ENCODE measurements at regions of chr6 and their contacts with region 1.

Region 1: GRCh38 chr6:119742188-119742803 is 392.7 kb upstream of the MAN1A1 start:
- DNase-seq: peak; percentile 71
- ATAC-seq: peak; percentile 63
- H3K4me3 ChIP-seq: no peak overlapping the region
- H3K4me3 Mint-ChIP-seq: no peak overlapping the region
- H3K27ac ChIP-seq: no peak overlapping the region
- H3K27ac Mint-ChIP-seq: no peak overlapping the region
- H3K4me1 ChIP-seq: peaks cover 0 to 6% of the 10 kb centered on the region in 2 donors
- H3K4me1 Mint-ChIP-seq: peaks cover 6% of the 10 kb centered on the region
- H3K27me3 ChIP-seq: no peaks in the 10 kb centered on the region
- H3K27me3 Mint-ChIP-seq: no peaks in the 10 kb centered on the region
- CTCF ChIP-seq: peak; percentile 89

Region 2: DNA sequence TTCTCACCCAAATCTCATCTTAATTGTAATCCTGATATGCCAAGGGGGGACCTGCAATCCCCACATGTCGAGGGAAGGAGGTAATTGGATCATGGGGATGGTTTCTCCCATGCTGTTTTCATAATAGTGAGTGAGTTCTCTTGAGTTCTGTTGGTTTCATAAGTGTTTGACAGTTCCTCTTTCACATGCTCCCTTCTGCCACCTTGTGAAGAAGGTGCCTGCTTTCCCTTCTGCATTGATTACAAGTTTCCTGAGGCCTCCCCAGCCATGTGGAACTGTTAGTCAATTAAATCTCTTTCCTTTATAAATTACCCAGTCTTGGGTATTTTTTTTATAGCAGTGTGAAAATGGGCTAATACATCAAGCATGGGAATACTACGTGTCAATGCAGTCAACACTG is 532.3 kb after region 1 on chr6:
- CTCF ChIA-PET with region 1: no interaction called
- POLR2A ChIA-PET with region 1: no interaction called
- intact Hi-C with region 1: loop called (anchors 2 kb)
- DNase-seq: peak; percentile 62
- ATAC-seq: peak; percentile 39
- H3K4me3 ChIP-seq: no peak overlapping the region
- H3K4me3 Mint-ChIP-seq: peak overlapping the region; percentile 46
- H3K27ac ChIP-seq: peak overlapping the region; percentile 23 to 56
- H3K27ac Mint-ChIP-seq: peak overlapping the region; percentile 86
- H3K4me1 ChIP-seq: peaks cover 14 to 17% of the 10 kb centered on the region in 2 donors
- H3K4me1 Mint-ChIP-seq: peaks cover 13% of the 10 kb centered on the region
- H3K27me3 ChIP-seq: no peaks in the 10 kb centered on the region
- H3K27me3 Mint-ChIP-seq: no peaks in the 10 kb centered on the region
- CTCF ChIP-seq: no peak

Region 3: DNA sequence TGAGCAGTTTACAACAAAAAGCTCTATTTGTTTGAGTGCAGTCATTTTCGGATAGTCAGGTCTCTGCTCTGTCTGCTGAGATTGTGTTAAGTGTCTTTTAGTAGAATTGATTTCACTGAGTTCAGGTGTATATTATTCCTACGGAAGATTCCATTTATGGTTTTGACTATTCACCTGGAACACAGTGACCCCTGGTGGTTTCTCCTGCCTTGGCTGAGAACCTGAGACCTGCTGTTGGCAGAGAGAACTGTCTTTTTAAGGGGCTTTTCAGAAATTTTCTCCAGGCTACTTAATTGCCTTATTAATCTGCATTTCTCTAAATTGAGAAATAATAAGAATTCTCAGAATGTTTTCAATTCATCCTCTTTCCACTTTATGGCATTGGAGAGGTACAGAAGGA is 1084.0 kb after region 1 on chr6:
- CTCF ChIA-PET with region 1: no interaction called
- POLR2A ChIA-PET with region 1: no interaction called
- intact Hi-C with region 1: loop called (anchors 2 kb)
- DNase-seq: peak; percentile 25
- ATAC-seq: no peak
- H3K4me3 ChIP-seq: no peak overlapping the region
- H3K4me3 Mint-ChIP-seq: no peak overlapping the region
- H3K27ac ChIP-seq: no peak overlapping the region
- H3K27ac Mint-ChIP-seq: no peak overlapping the region
- H3K4me1 ChIP-seq: no peaks in the 10 kb centered on the region
- H3K4me1 Mint-ChIP-seq: no peaks in the 10 kb centered on the region
- H3K27me3 ChIP-seq: no peaks in the 10 kb centered on the region
- H3K27me3 Mint-ChIP-seq: no peaks in the 10 kb centered on the region
- CTCF ChIP-seq: peak; percentile 53

Region 4: GRCh38 chr6:121305957-121306607 is 1563.8 kb after region 1 on chr6:
- CTCF ChIA-PET with region 1: interaction called, 3 read pairs
- POLR2A ChIA-PET with region 1: no interaction called
- intact Hi-C with region 1: loop called (anchors 2 kb)
- DNase-seq: peak; percentile 39
- ATAC-seq: no peak
- H3K4me3 ChIP-seq: no peak overlapping the region
- H3K4me3 Mint-ChIP-seq: no peak overlapping the region
- H3K27ac ChIP-seq: no peak overlapping the region
- H3K27ac Mint-ChIP-seq: no peak overlapping the region
- H3K4me1 ChIP-seq: no peaks in the 10 kb centered on the region
- H3K4me1 Mint-ChIP-seq: no peaks in the 10 kb centered on the region
- H3K27me3 ChIP-seq: no peaks in the 10 kb centered on the region
- H3K27me3 Mint-ChIP-seq: no peaks in the 10 kb centered on the region
- CTCF ChIP-seq: peak; percentile 79

Measured in B cell (primary cell).